ENCODE measurements at regions of chr20 and their contacts with region 1.

Region 1: DNA sequence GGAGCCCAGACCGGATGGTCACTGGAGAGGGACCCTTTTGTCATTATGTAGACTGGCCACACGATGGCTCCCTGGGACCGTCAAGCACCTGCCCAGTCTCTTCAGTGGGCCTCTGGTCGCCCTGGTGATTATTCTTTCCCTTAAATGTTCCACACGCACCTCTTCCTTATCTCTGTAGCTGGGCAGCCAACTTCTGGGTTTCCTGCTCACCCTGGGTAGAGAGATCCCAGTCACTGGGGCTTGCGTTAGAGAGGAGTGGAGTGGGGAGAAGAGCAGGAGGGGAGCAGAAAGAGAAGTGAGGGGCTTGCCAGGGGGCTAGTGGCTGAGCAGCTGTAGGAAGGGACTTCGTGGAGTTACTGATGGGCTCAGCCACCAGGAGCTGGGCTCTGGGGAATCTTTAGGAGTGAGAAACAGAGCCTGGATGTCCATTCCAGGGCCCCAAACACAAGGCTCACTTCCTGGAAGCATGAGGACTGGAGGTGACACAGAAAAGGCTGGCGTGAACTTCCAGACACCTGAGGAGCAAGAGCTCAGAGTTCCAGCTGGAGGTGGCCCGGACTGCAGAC is 150.1 kb downstream of the DHX35 start:
- DNase-seq: peak; percentile 91
- H3K4me3 ChIP-seq: peak overlapping the region in 1 of 2 experiments; percentile 24; a peak in 1 of 4 replicates
- H3K27ac ChIP-seq: no peak overlapping the region
- H3K4me1 ChIP-seq: peaks cover 0 to 4% of the 10 kb centered on the region in 2 experiments; a peak in 1 of 4 replicates
- H3K27me3 ChIP-seq: peaks cover 5% of the 10 kb centered on the region; the same call in 1 of the 2 replicates
- CTCF ChIP-seq: peak; percentile 56
- EP300 ChIP-seq: no peak
- RAD21 ChIP-seq: peak; percentile 94

Region 2: GRCh38 chr20:38985603-38986170 is 126.6 kb before region 1 on chr20:
- CTCF ChIA-PET with region 1: no interaction called
- POLR2A ChIA-PET with region 1: no interaction called
- DNase-seq: no peak
- H3K4me3 ChIP-seq: no peak overlapping the region
- H3K27ac ChIP-seq: peak overlapping the region; percentile 54 to 82; a peak in 3 of 4 replicates
- H3K4me1 ChIP-seq: peaks cover 0 to 22% of the 10 kb centered on the region in 2 experiments
- H3K27me3 ChIP-seq: no peaks in the 10 kb centered on the region
- CTCF ChIP-seq: no peak
- EP300 ChIP-seq: peak; percentile 64 to 86
- RAD21 ChIP-seq: no peak

Region 3: DNA sequence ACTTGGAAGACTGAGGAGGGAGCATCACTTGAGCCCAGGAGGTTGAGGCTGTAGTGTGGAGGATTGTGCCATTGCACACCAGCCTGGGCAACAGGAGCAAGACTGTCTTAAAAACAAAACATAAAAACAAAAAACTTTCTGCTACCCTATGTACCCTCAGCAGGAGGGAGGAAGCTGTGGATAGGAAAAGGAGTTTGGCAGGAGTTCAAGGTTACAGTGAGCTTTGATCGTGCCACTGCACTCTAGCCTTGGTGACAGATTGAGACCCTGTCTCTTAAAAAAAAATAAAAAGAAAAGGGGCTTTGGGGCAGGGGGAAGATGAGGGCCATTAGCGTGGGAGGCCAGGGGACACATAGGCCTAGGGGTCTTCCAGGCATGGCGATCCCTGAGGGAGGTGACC is 14.4 kb before region 1 on chr20:
- CTCF ChIA-PET with region 1: interaction called, 15 read pairs
- POLR2A ChIA-PET with region 1: no interaction called
- DNase-seq: no peak
- H3K4me3 ChIP-seq: no peak overlapping the region
- H3K27ac ChIP-seq: no peak overlapping the region
- H3K4me1 ChIP-seq: no peaks in the 10 kb centered on the region
- H3K27me3 ChIP-seq: no peaks in the 10 kb centered on the region
- CTCF ChIP-seq: no peak
- EP300 ChIP-seq: no peak
- RAD21 ChIP-seq: no peak

Region 4: DNA sequence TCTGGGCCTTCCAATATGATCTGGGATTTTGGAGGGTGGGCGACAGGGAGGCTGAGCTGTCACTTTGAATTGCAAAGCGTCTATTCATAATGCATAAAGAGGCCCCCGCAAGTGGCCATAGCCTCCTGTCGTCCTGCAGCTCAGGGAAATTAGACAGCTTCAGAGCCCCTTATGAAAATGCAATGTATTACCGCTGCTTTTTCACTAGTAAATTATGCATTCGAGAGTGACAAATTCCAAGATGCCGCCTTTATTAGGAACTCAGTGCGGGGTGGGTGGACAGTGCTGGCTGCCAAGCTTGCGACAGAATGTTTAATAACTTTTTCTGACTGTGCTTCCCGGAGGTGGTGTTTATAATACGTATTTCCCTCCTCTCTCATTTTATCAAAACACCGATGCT is 18.4 kb after region 1 on chr20:
- CTCF ChIA-PET with region 1: interaction called, 12 read pairs
- POLR2A ChIA-PET with region 1: no interaction called
- DNase-seq: no peak
- H3K4me3 ChIP-seq: no peak overlapping the region
- H3K27ac ChIP-seq: no peak overlapping the region
- H3K4me1 ChIP-seq: no peaks in the 10 kb centered on the region; a peak in 1 of 4 replicates
- H3K27me3 ChIP-seq: no peaks in the 10 kb centered on the region
- CTCF ChIP-seq: no peak
- EP300 ChIP-seq: no peak
- RAD21 ChIP-seq: no peak

Region 5: GRCh38 chr20:39195582-39196021 is 83.3 kb after region 1 on chr20:
- CTCF ChIA-PET with region 1: interaction called, 13 read pairs
- POLR2A ChIA-PET with region 1: no interaction called
- DNase-seq: peak; percentile 44
- H3K4me3 ChIP-seq: no peak overlapping the region; a peak in 1 of 4 replicates
- H3K27ac ChIP-seq: peak overlapping the region in 1 of 2 experiments; percentile 72; a peak in 1 of 4 replicates
- H3K4me1 ChIP-seq: peaks cover 0 to 8% of the 10 kb centered on the region in 2 experiments; a peak in 1 of 4 replicates
- H3K27me3 ChIP-seq: no peaks in the 10 kb centered on the region
- CTCF ChIP-seq: no peak
- EP300 ChIP-seq: no peak
- RAD21 ChIP-seq: no peak

Region 6: DNA sequence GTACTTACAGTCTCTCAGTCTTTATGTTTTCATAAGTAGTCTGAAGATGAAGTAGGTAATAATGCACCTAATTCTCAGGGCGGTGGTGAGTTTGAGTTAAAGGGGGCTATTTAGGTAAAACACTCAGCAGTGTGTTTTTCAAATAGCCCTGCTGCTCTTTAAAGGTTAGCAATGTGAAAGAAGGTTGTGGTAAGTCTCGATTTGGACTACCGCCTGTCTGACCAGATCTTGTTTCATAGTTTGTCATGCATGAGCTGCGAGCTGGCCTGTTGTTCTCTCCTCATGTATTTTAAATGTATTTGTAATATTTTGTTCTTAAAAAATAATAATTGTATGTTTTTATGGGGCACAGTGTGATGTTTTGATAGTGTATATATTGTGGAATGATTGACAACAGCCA is 190.1 kb after region 1 on chr20:
- CTCF ChIA-PET with region 1: no interaction called
- POLR2A ChIA-PET with region 1: no interaction called
- DNase-seq: no peak
- H3K4me3 ChIP-seq: no peak overlapping the region
- H3K27ac ChIP-seq: no peak overlapping the region
- H3K4me1 ChIP-seq: no peaks in the 10 kb centered on the region; a peak in 1 of 4 replicates
- H3K27me3 ChIP-seq: no peaks in the 10 kb centered on the region
- CTCF ChIP-seq: no peak
- EP300 ChIP-seq: no peak
- RAD21 ChIP-seq: no peak

Region 7: GRCh38 chr20:39429716-39430115 is 317.5 kb after region 1 on chr20:
- CTCF ChIA-PET with region 1: interaction called, 11 read pairs
- POLR2A ChIA-PET with region 1: no interaction called
- DNase-seq: peak; percentile 24
- H3K4me3 ChIP-seq: no peak overlapping the region; a peak in 1 of 4 replicates
- H3K27ac ChIP-seq: no peak overlapping the region
- H3K4me1 ChIP-seq: no peaks in the 10 kb centered on the region
- H3K27me3 ChIP-seq: no peaks in the 10 kb centered on the region
- CTCF ChIP-seq: peak; percentile 24; the same call in 1 of the 2 replicates
- EP300 ChIP-seq: no peak
- RAD21 ChIP-seq: peak; percentile 53

Region 8: DNA sequence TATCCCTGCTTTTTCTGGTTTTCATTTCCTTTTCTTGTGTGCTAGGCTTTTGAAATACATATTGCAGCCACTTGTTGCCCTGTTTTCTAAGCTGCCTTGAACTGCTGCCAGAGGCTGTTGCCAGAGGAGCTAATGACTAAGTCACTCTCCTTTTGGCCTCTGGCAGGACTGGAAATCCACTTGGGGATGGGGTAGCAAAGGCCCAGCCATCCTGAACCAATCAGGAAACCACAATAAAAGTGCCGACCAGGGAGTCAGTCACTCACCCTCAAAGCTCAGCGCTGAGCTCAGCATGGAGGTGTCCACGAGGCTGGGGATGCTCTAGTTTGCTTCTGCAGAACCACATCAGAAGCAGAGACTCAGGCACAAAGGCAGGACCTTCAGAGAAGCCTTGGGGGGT is 662.8 kb after region 1 on chr20:
- CTCF ChIA-PET with region 1: no interaction called
- POLR2A ChIA-PET with region 1: no interaction called
- DNase-seq: no peak
- H3K4me3 ChIP-seq: no peak overlapping the region
- H3K27ac ChIP-seq: no peak overlapping the region
- H3K4me1 ChIP-seq: peaks cover 0 to 5% of the 10 kb centered on the region in 2 experiments; a peak in 1 of 4 replicates
- H3K27me3 ChIP-seq: no peaks in the 10 kb centered on the region
- CTCF ChIP-seq: no peak
- EP300 ChIP-seq: no peak
- RAD21 ChIP-seq: no peak

Region 9: DNA sequence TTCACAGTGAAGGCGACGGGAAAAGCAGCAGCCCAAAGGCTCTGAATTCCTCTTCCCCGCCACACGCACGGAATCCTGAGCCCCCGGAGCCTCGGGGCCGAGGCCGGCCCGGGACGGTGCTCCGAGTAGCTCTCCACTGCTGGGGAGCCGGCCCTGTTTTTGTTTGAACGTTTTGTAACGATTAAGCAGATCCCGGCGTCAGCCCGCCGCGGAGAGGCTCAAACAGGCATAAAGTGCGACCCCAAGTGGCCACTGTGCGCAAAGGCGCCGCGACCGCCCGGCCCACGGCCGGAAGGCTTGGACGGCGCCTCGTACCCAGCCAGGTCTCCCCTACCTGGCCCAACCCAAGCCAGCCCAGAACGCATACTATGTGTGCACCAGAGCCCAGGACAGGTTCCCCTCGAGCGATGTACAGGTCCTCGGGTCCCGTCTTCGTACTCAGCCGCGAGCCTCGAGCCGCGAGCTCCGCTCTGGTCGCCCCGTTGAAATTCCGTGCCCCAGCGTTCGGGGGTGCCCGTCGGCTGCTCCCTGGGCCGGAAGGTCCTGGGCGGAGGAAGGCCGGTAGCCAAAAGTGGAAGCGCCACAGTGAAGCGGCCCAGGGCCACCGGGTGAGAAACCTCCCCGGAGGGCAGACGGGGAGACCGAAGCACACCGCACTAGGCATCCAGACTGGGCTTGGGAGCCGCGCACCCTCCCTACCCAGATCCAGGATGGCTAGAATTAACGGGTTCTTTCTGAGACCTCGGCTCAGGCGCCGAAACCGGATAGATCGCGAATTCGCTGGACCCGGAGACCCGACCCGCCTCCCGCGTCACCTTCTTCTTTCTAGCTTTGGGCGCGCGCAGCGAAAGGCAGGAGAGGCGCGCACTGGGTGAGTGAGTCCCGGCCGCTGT is 1577.9 kb after region 1 on chr20:
- CTCF ChIA-PET with region 1: interaction called, 13 read pairs
- POLR2A ChIA-PET with region 1: interaction called, 3 read pairs
- DNase-seq: peak; percentile 89
- H3K4me3 ChIP-seq: peak overlapping the region; percentile 55 to 77
- H3K27ac ChIP-seq: peak overlapping the region in 1 of 2 experiments; percentile 85; a peak in 2 of 4 replicates
- H3K4me1 ChIP-seq: peaks cover 0 to 11% of the 10 kb centered on the region in 2 experiments; a peak in 1 of 4 replicates
- H3K27me3 ChIP-seq: peaks cover 61% of the 10 kb centered on the region
- CTCF ChIP-seq: peak; percentile 82
- EP300 ChIP-seq: no peak
- RAD21 ChIP-seq: peak; percentile 89

Measured in SK-N-SH (cell line).